Activated T-helper 1 cell treated with anti-CD3 and anti-CD28 coated beads, Interleukin-12 subunit alpha, Interleukin-12 subunit beta, Interleukin-2, Interleukin-4 antibody, amounts not matched to agents 30 ng/mL and 10 ng/mL and 1 ng/mL, durations not matched to agents 14 hours and 24 hours and 36 hours (primary cell): ENCODE measurements at regions of chr2 and their contacts with region 1.

Region 1: DNA sequence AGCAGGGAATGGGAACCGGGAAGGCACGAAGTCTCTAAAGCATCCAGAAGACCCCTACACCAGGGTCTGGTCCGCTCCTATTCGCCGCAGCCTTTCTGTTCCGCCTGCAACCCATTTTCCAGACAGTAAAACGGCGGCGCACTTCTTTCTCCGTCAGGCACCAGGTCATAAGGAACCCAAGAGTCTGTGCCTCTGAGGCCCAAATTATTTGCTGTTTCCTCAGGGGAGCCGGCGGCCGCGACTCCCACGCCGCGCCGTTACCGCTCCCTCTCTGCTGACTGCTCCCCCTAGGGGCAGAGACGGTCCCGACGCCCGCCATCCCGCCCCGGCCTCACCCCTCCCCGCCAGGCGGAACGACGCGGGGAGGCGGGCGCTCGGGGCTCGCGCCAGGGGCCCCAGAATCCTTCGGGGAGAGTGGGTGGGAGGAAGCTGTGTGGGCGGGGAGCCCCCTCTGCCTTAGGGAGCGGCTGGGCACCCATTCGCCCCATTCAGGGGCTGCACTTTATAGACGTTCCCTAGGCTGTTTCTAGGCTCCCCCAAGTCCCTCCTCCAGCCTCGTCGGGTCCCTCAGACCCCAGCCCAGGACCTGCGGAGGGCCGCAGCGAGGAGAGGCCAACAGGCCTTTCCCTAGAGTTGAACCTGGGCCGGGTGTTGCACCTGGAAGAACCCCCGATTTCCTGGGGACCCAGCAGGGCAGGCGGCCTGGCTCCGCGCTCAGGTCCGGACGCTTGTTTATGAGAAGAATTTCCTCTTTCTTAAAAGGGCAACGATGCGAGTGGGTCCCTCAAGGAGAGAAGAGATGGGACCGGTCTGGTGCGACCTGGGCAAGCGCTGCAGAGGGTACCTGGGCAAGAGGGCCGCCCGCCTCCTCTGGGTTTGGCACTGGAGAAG is 3.6 kb upstream of the CTDSP1 start:
- DNase-seq: peak; percentile 93
- H3K4me3 Mint-ChIP-seq: peak overlapping the region; percentile 94
- H3K27ac Mint-ChIP-seq: peak overlapping the region; percentile 98
- H3K4me1 Mint-ChIP-seq: peaks cover 40% of the 10 kb centered on the region
- H3K27me3 Mint-ChIP-seq: peaks cover 3% of the 10 kb centered on the region

Region 2: GRCh38 chr2:218269899-218270720 is 125.9 kb before region 1 on chr2 and contains the starts of genes AAMP and PNKD:
- intact Hi-C with region 1: loop called (anchors 1 kb)
- DNase-seq: peak; percentile 100
- H3K4me3 Mint-ChIP-seq: peak within 1 kb of the TSS; percentile 89
- H3K27ac Mint-ChIP-seq: peak within 1 kb of the TSS; percentile 87
- H3K4me1 Mint-ChIP-seq: peaks cover 38% of the 10 kb centered on the region
- H3K27me3 Mint-ChIP-seq: peaks cover 1% of the 10 kb centered on the region
- total RNA-seq, gene AAMP: 88.0 and 90.2 TPM in 2 replicates
- total RNA-seq, gene PNKD: 18.6 and 20.3 TPM in 2 replicates

Region 3: GRCh38 chr2:218301176-218301819 is 94.7 kb before region 1 on chr2:
- intact Hi-C with region 1: loop called (anchors 1 kb)
- DNase-seq: peak; percentile 83
- H3K4me3 Mint-ChIP-seq: no peak overlapping the region
- H3K27ac Mint-ChIP-seq: no peak overlapping the region
- H3K4me1 Mint-ChIP-seq: peaks cover 5% of the 10 kb centered on the region
- H3K27me3 Mint-ChIP-seq: peaks cover 2% of the 10 kb centered on the region

Region 4: DNA sequence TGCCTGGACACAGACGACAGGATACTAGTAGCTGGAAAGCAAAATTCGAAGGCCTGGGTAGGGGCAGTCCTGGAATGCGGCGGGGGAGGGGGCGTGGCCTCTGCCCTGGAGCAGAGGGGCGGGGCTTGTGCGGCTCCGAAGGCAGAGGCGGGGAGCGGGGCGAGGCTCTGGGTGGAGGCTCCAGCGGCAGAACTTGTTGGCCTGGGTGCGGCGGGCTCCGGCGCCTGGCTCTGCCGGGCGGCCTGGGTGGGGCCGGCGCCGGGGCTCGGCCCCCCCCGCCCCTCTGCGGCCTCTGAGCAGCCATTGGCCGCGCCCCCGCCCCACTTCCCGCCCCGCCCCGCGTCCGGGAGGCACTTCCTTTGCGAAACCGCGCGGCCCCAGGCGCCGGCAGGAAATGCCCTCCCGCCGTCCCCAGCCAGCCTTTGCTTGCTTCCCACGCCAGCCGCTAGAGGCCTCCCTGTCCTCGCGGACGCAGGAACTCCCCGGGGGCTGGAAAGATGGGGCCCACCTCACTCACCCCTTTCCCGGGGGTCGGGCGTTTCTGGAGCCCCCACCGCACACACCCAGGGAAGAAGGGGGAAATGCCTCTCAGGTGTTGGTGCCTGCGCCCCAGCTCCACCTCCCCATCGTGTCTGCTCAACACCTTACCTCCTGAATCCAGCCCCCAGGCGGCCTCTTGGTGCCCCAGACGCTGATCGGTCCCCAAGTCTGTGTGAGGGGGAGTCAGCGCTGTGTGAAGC is 10.3 kb after region 1 on chr2:
- intact Hi-C with region 1: loop called (anchors 1 kb)
- DNase-seq: peak; percentile 90
- H3K4me3 Mint-ChIP-seq: peak overlapping the region; percentile 81
- H3K27ac Mint-ChIP-seq: peak overlapping the region; percentile 74
- H3K4me1 Mint-ChIP-seq: peaks cover 29% of the 10 kb centered on the region
- H3K27me3 Mint-ChIP-seq: no peaks in the 10 kb centered on the region

Region 5: GRCh38 chr2:218622606-218623365 is 226.7 kb after region 1 on chr2:
- intact Hi-C with region 1: no loop called
- DNase-seq: no peak
- H3K4me3 Mint-ChIP-seq: no peak overlapping the region
- H3K27ac Mint-ChIP-seq: no peak overlapping the region
- H3K4me1 Mint-ChIP-seq: no peaks in the 10 kb centered on the region
- H3K27me3 Mint-ChIP-seq: peaks cover 1% of the 10 kb centered on the region

Region 6: GRCh38 chr2:218710687-218711549 is 314.9 kb after region 1 on chr2 and contains the start of gene TTLL4:
- intact Hi-C with region 1: loop called (anchors 2 kb)
- DNase-seq: peak; percentile 99
- H3K4me3 Mint-ChIP-seq: peak within 1 kb of the TSS; percentile 94
- H3K27ac Mint-ChIP-seq: peak within 1 kb of the TSS; percentile 87
- H3K4me1 Mint-ChIP-seq: peaks cover 27% of the 10 kb centered on the region
- H3K27me3 Mint-ChIP-seq: peaks cover 12% of the 10 kb centered on the region
- total RNA-seq, gene TTLL4: 70.6 and 78.3 TPM in 2 replicates

Region 7: GRCh38 chr2:219253753-219254590 is 857.9 kb after region 1 on chr2 and contains the start of gene TUBA4A:
- intact Hi-C with region 1: loop called (anchors 5 kb)
- DNase-seq: peak; percentile 87
- H3K4me3 Mint-ChIP-seq: peak within 1 kb of the TSS; percentile 93
- H3K27ac Mint-ChIP-seq: peak within 1 kb of the TSS; percentile 98
- H3K4me1 Mint-ChIP-seq: peaks cover 50% of the 10 kb centered on the region
- H3K27me3 Mint-ChIP-seq: no peaks in the 10 kb centered on the region
- total RNA-seq, gene TUBA4A: 211 and 217 TPM in 2 replicates